ENCODE measurements at regions of chr16 and their contacts with region 1.

Region 1: GRCh38 chr16:19601083-19601976 is 45.8 kb downstream of the VPS35L start:
- DNase-seq: no peak
- H3K4me3 ChIP-seq: no peak overlapping the region
- H3K27ac ChIP-seq: no peak overlapping the region
- H3K4me1 ChIP-seq: no peaks in the 10 kb centered on the region
- H3K27me3 ChIP-seq: no peaks in the 10 kb centered on the region
- CTCF ChIP-seq: peak; percentile 42 to 70 (median 65)
- POLR2A ChIP-seq: no peak

Region 2: GRCh38 chr16:19555162-19555937 is 46.0 kb before region 1 on chr16 and contains the start of gene VPS35L:
- intact Hi-C with region 1: loop called (anchors 5 kb)
- DNase-seq: peak; percentile 90
- H3K4me3 ChIP-seq: peak within 1 kb of the TSS; percentile 48 to 60
- H3K27ac ChIP-seq: peak within 1 kb of the TSS; percentile 85
- H3K4me1 ChIP-seq: no peaks in the 10 kb centered on the region
- H3K27me3 ChIP-seq: no peaks in the 10 kb centered on the region
- CTCF ChIP-seq: peak; percentile 63 to 85 (median 74)
- POLR2A ChIP-seq: peak; percentile 50
- total RNA-seq, gene VPS35L: 58.8 to 74.0 TPM

Region 3: GRCh38 chr16:19696328-19696727 is 95.0 kb after region 1 on chr16:
- intact Hi-C with region 1: no loop called
- DNase-seq: peak; percentile 75
- H3K4me3 ChIP-seq: no peak overlapping the region
- H3K27ac ChIP-seq: peak overlapping the region; percentile 61 to 62
- H3K4me1 ChIP-seq: peaks cover 9% of the 10 kb centered on the region
- H3K27me3 ChIP-seq: no peaks in the 10 kb centered on the region
- CTCF ChIP-seq: no peak
- POLR2A ChIP-seq: no peak

Region 4: GRCh38 chr16:19717771-19718602 is 116.7 kb after region 1 on chr16 and contains the starts of genes IQCK and KNOP1:
- intact Hi-C with region 1: loop called (anchors 10 kb)
- DNase-seq: peak; percentile 84
- H3K4me3 ChIP-seq: peak within 1 kb of the TSS; percentile 95 to 98
- H3K27ac ChIP-seq: peak within 1 kb of the TSS; percentile 67 to 69
- H3K4me1 ChIP-seq: no peaks in the 10 kb centered on the region
- H3K27me3 ChIP-seq: no peaks in the 10 kb centered on the region
- CTCF ChIP-seq: peak in 1 of 4 experiments; percentile 17
- POLR2A ChIP-seq: no peak
- total RNA-seq, gene IQCK: 26.0 to 42.2 TPM
- total RNA-seq, gene KNOP1: 11.2 to 26.6 TPM

Region 5: DNA sequence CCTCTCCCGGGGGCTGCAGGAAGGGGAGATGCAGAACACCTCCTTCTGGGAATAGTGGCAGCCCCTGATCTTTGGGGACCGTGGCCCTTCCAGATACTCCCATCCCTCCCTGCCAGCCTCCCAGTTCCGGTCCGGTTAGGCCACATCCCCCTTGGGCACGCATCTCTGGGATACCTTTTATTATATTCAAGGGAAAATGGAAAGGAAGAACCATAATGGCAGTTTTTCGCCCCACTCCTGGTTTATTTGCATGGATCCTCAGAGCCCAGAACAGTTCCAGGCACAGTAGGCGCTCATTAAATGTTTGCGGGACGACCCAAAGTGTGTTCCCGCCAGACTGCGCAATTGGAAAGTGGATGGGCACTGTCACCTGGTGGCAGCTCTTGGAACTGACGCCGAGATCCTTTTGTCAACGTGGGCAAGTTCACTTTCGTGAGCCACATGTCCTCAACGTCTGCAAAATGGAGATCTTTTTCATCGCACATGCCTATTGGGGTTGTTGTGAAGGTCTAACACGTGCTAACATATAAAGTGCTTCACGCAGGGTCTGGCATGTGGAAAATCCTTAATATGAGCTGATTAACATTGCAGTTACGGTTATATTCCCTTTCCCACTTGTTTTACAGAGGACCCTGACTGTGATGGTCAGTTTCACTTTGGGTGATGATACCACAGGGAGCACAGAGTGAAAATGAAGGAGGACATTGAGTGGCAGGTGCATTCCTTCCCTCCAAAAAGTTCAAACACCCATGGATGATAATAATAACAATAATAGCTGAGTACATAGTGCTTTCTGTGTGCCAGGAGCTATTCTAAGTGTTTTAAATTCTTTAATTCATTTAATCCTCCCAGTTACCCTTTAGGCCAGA is 285.0 kb after region 1 on chr16:
- intact Hi-C with region 1: loop called (anchors 1 kb)
- DNase-seq: peak; percentile 58
- H3K4me3 ChIP-seq: no peak overlapping the region
- H3K27ac ChIP-seq: no peak overlapping the region
- H3K4me1 ChIP-seq: no peaks in the 10 kb centered on the region
- H3K27me3 ChIP-seq: no peaks in the 10 kb centered on the region
- CTCF ChIP-seq: peak; percentile 99 to 100 (median 99)
- POLR2A ChIP-seq: no peak

Region 6: GRCh38 chr16:20318440-20318839 is 717.1 kb after region 1 on chr16:
- intact Hi-C with region 1: no loop called
- DNase-seq: peak; percentile 38
- H3K4me3 ChIP-seq: no peak overlapping the region
- H3K27ac ChIP-seq: no peak overlapping the region
- H3K4me1 ChIP-seq: no peaks in the 10 kb centered on the region
- H3K27me3 ChIP-seq: no peaks in the 10 kb centered on the region
- CTCF ChIP-seq: no peak
- POLR2A ChIP-seq: no peak

Measured in prostate gland (tissue), 2 donors.